ENCODE measurements at regions of chr3 and their contacts with region 1.

Region 1: DNA sequence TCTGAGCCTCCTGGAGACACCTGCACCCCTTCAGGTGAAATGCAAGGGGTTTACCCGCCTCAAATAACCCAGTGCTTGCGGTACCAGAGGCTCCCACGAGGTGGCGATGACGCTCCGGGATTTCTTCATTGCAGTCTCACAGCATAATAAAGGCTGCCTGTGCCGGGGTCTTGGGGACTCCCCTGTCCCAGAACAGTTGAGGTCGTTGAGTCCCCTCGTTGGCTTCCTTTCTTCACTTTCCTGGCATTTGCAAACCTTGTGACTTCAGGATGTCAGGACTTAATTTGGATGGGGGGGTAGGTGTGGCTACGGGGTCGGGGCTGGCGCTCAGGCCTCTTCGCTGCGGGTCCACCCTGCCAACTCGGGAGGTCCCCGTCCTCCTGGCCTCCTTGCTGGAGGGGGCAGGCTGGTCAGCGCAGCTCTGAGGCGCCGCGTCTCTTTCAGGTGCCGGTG is 1.3 kb downstream of the GNAT1 start:
- DNase-seq: peak; percentile 73 to 90 (median 83)
- ATAC-seq: peak; percentile 53
- H3K4me3 ChIP-seq: no peak overlapping the region
- H3K4me3 Mint-ChIP-seq: peak overlapping the region in 7 of 10 donors; percentile 45 to 67 (median 62)
- H3K27ac ChIP-seq: no peak overlapping the region
- H3K27ac Mint-ChIP-seq: peak overlapping the region in 3 of 9 donors; percentile 51 to 70 (median 65)
- H3K4me1 ChIP-seq: peaks cover 5 to 13% of the 10 kb centered on the region in 2 donors
- H3K4me1 Mint-ChIP-seq: peaks cover 4 to 16% (median 9%) of the 10 kb centered on the region in 7 donors
- H3K27me3 ChIP-seq: no peaks in the 10 kb centered on the region
- H3K27me3 Mint-ChIP-seq: peaks cover 0 to 21% (median 5%) of the 10 kb centered on the region in 5 donors

Region 2: DNA sequence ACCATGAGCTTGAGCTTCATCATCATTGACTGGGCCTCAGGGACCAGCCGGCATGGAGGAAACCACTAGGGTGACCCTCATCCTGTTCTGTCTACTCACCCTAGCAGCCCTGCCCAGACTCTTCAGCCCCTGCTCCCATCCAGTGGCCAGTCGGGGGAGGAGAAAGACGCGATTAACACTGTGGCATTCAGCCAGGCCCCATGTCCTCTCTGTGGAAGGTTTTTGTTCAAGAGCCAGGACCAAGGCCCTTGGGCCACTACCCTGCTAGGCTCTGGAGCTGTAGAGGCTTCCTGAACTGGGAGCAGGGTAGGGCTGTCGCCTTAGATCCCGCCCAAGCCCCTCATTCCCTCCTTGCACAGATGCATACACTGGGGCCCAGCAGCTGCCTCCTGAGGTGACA is 27.4 kb after region 1 on chr3:
- CTCF ChIA-PET with region 1: interaction called, 108 read pairs
- POLR2A ChIA-PET with region 1: interaction called, 4 read pairs
- intact Hi-C with region 1: no loop called
- DNase-seq: no peak
- ATAC-seq: no peak
- H3K4me3 ChIP-seq: no peak overlapping the region
- H3K4me3 Mint-ChIP-seq: no peak overlapping the region
- H3K27ac ChIP-seq: no peak overlapping the region
- H3K27ac Mint-ChIP-seq: no peak overlapping the region
- H3K4me1 ChIP-seq: no peaks in the 10 kb centered on the region
- H3K4me1 Mint-ChIP-seq: peaks cover 0 to 7% (median 2%) of the 10 kb centered on the region in 7 donors
- H3K27me3 ChIP-seq: no peaks in the 10 kb centered on the region
- H3K27me3 Mint-ChIP-seq: peaks cover 0 to 10% (median 0%) of the 10 kb centered on the region in 5 donors

Region 3: DNA sequence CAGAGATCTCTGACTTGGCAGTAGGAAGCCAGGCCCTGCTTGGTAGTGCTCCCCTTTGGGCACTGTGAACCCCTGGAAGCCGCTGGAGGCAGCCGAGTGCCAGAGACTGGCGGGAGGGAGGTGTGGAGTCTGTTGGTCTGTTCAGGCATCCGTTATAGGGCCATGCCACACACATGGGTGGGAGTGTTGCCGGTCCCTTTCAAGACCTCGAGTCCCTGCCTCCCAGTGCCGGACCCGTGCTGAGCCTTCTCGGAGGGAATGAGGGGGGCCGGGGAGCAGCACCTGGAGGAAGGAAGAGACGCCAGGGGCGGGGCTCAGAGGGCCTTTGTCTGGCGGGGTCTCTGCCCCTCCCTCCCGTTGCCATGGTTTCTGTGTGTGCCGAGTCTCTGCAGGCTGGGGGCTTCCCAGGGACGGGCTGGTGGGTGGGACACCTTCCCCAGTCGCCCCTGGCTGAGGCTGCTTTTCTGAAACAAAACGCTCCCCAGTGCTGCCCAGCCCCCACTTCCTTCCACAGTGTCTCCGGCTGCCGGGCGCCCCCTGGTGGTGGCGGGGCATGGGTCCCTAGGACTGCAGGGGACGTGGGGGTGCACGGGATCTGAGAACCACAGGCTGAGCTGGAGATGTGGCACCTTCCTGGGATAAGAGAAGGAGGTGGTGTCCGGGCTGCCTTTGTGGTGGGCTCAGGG is 53.3 kb after region 1 on chr3:
- CTCF ChIA-PET with region 1: interaction called, 33 read pairs
- POLR2A ChIA-PET with region 1: interaction called, 11 read pairs
- intact Hi-C with region 1: loop called (anchors 1 kb)
- DNase-seq: peak; percentile 88 to 99 (median 94)
- ATAC-seq: peak; percentile 90
- H3K4me3 ChIP-seq: peak overlapping the region; percentile 52
- H3K4me3 Mint-ChIP-seq: peak overlapping the region; percentile 77 to 89 (median 82)
- H3K27ac ChIP-seq: peak overlapping the region; percentile 88
- H3K27ac Mint-ChIP-seq: peak overlapping the region; percentile 80 to 96 (median 95)
- H3K4me1 ChIP-seq: peaks cover 61 to 87% of the 10 kb centered on the region in 2 donors
- H3K4me1 Mint-ChIP-seq: peaks cover 57 to 90% (median 74%) of the 10 kb centered on the region in 7 donors
- H3K27me3 ChIP-seq: no peaks in the 10 kb centered on the region
- H3K27me3 Mint-ChIP-seq: no peaks in the 10 kb centered on the region

Region 4: DNA sequence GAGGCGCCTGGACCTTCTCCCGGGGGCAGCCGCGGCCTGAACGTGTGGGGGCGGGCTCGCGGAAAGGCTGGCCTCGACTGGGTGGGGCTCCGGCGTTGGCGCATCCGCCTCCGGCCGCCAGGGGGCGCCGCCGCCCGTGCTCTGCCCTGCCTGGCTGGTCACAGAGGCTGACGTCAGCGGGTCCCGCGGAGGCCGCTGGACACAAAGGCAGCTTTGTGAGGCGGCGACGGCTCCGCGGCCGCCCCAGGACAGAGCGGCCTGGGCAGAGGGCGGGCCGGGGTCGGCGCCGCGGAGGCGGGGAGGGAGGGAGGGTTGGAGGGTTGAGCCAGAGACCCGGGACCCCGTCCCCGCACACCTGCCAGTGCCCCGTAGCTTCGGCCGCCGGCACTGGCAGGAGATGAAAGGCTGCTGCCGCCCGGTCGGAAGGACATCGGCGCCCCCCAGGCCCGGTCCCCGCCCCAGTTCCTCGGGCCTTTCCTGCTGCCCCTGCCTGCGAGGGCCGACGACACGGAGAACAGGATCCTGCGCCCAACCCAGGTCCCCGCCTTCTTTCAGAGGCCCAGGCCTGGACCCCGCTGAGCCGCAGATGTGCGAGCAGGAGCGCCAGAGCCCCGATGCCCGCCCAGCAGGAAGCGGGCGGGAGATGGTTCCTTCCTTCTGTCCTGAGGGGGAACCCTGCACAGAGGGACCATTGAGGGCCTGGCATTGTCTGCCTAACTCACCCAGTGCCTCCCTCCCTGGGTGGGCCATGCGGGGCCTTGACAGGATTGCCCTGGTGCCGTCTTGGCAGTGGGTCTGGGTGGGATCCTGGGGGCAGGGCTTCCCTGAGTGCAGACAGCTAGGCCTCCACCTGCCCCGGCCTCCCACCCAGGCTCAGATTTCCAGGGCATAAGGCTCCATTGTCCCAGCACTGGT is 67.6 kb after region 1 on chr3:
- CTCF ChIA-PET with region 1: interaction called, 6 read pairs
- POLR2A ChIA-PET with region 1: no interaction called
- intact Hi-C with region 1: loop called in 1 of 2 experiments (anchors 1 kb)
- DNase-seq: peak; percentile 58 to 95 (median 78)
- ATAC-seq: peak; percentile 95
- H3K4me3 ChIP-seq: peak overlapping the region; percentile 43
- H3K4me3 Mint-ChIP-seq: peak overlapping the region; percentile 57 to 86 (median 68)
- H3K27ac ChIP-seq: peak overlapping the region; percentile 76
- H3K27ac Mint-ChIP-seq: peak overlapping the region in 8 of 9 donors; percentile 38 to 85 (median 77)
- H3K4me1 ChIP-seq: peaks cover 6% of the 10 kb centered on the region in 2 donors
- H3K4me1 Mint-ChIP-seq: peaks cover 0 to 12% (median 4%) of the 10 kb centered on the region in 7 donors
- H3K27me3 ChIP-seq: no peaks in the 10 kb centered on the region
- H3K27me3 Mint-ChIP-seq: no peaks in the 10 kb centered on the region

Measured in naive thymus-derived CD4-positive, alpha-beta T cell (primary cell).